ENCODE measurements at regions of chr1 and their contacts with region 1.

Region 1: GRCh38 chr1:12161662-12162458 is 4.9 kb upstream of the TNFRSF1B start:
- DNase-seq: peak; percentile 92
- H3K4me3 ChIP-seq: no peak overlapping the region
- H3K27ac ChIP-seq: peak overlapping the region; percentile 49 to 70 (median 64)
- H3K4me1 ChIP-seq: peaks cover 0 to 28% (median 16%) of the 10 kb centered on the region in 4 donors
- H3K27me3 ChIP-seq: peaks cover 0 to 6% (median 0%) of the 10 kb centered on the region in 3 donors
- CTCF ChIP-seq: no peak
- EP300 ChIP-seq: no peak
- POLR2A ChIP-seq: no peak

Region 2: GRCh38 chr1:12196641-12197482 is 35.0 kb after region 1 on chr1:
- intact Hi-C with region 1: loop called (anchors 5 kb)
- DNase-seq: no peak
- H3K4me3 ChIP-seq: no peak overlapping the region
- H3K27ac ChIP-seq: peak overlapping the region in 1 of 4 donors; percentile 37
- H3K4me1 ChIP-seq: no peaks in the 10 kb centered on the region
- H3K27me3 ChIP-seq: no peaks in the 10 kb centered on the region
- CTCF ChIP-seq: no peak
- EP300 ChIP-seq: peak in 1 of 4 donors; percentile 34
- POLR2A ChIP-seq: no peak

Region 3: GRCh38 chr1:12344596-12345349 is 182.9 kb after region 1 on chr1:
- intact Hi-C with region 1: no loop called
- DNase-seq: peak; percentile 63
- H3K4me3 ChIP-seq: no peak overlapping the region
- H3K27ac ChIP-seq: peak overlapping the region; percentile 30 to 59 (median 55)
- H3K4me1 ChIP-seq: peaks cover 0 to 18% (median 13%) of the 10 kb centered on the region in 4 donors
- H3K27me3 ChIP-seq: no peaks in the 10 kb centered on the region
- CTCF ChIP-seq: no peak
- EP300 ChIP-seq: no peak
- POLR2A ChIP-seq: no peak